Activated CD8-positive, alpha-beta T cell treated with anti-CD3 and anti-CD28 coated beads for 36 hours (primary cell): ENCODE measurements at regions of chr3 and their contacts with region 1.

Region 1: DNA sequence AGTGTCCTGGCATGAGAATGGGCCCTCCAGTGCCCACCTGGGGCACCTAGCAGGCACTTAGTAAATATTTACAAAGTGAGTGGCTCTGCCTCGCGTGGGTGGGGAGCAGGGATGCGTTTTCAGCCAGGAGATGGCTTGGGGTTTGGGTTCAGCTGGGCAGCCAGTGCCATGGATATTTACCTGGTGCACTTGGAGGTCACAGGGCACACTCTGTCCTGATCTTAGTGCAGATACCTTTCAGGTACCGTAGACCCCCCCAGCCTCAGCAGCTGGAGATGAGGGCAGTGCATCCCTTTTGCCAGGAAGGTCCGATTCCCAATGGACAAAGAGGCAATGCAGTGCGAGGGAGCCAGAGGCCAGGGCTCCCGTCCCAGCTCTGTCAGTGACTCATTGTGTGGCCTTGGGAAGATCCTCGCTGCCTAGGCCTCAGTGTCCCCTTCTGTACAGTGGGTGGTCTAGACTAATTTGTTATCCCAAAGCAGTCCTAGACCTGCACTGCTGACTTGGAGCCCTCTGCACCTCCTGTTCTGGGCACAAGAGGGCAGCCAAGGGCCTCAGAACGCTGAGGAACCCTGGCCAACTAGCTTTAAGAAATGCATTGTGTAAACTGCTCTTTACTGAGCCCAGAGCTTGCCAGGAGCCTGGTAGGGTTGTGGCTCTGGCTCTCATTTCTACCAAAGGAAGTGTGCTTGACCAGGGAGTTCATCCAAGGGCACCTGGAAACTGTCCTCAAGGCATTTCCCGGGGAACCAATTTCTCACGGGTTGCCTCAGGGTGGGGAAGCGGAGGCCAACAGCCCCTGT is 16.0 kb downstream of the HDAC11 start:
- DNase-seq: peak; percentile 85
- ATAC-seq: peak; percentile 98
- H3K4me3 Mint-ChIP-seq: no peak overlapping the region
- H3K27ac Mint-ChIP-seq: no peak overlapping the region
- H3K4me1 Mint-ChIP-seq: peaks cover 3% of the 10 kb centered on the region
- H3K27me3 Mint-ChIP-seq: no peaks in the 10 kb centered on the region
- CTCF ChIP-seq: peak; percentile 95

Region 2: DNA sequence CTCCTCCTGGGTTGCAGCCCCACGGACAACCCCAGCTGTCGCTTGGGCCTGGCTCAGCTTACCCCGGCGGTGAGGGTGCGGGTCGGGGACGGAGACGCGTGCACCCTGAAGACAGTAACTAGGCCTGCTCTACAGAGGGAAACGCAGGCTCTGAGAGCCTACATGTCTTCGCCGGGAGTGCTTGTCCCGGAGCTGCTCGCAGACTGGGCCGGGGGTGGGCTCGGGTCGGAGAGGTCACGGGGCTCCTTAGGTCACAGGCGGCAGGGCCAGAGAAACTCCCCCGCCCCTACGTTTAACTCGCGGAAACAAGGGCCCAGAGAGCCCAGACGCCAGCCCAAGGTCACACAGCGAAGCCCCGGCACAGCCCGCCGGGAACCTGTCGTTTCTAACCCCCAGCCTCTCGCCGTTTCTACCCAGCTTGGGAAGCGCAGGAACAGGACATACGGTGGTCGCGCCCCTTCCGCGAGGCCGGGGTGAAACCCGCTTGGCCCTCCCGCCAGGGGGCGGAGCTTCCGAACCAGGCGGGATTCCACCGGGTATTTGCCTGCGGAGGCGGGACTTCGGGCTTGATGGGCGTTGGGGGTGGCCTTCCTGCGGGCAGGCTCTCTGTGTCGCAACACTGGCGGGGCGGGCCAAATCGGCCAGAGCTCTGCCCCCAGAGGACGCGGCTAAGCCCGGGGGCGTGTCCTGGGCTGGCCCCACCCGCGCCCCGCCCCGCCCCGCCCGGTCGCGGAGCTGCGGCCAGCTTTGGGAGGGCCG is 16.4 kb before region 1 on chr3 and contains the start of gene HDAC11:
- CTCF ChIA-PET with region 1: interaction called, 23 read pairs
- POLR2A ChIA-PET with region 1: no interaction called
- intact Hi-C with region 1: no loop called
- DNase-seq: peak; percentile 98
- ATAC-seq: peak; percentile 97
- H3K4me3 Mint-ChIP-seq: peak within 1 kb of the TSS; percentile 90
- H3K27ac Mint-ChIP-seq: peak within 1 kb of the TSS; percentile 89
- H3K4me1 Mint-ChIP-seq: peaks cover 20% of the 10 kb centered on the region
- H3K27me3 Mint-ChIP-seq: no peaks in the 10 kb centered on the region
- CTCF ChIP-seq: no peak
- total RNA-seq, gene HDAC11: 1.8 to 2.0 TPM

Region 3: DNA sequence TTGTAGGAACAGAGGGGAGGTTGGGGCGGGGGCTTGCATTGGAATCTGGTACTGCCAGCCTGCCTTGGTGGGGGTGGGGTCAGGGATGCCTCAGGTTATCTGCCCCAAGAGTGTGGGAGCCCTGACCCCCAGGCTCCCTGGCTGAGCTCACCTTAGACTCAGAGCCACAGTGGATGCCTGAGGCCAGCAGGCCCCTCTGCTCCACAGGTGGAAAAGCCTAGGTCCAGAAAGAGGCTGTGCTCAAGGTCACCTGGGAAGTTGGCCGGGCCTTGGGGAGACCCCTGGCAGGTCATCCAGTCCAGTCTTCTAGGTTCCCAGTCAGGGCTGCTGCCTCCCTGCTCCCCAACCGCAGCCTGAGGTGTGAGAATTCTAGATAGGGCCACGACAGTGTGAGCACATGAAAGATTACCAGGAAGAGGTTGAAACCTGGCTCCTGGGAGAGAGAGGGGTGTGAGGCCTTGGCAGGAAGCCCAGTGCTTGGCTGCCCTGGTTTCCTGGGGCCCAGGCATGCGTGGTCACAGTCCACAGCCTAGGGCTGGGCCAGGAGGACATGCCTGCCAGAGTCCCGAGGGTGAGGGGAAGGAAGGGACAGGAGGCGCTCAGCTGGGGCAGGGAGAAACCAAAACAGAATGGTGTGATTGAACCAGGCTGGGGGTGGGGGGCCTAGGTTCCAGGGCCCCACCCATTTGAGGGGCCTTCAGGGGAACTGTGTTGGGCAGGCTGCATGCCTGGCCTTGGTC is 11.1 kb before region 1 on chr3:
- CTCF ChIA-PET with region 1: interaction called, 23 read pairs
- POLR2A ChIA-PET with region 1: no interaction called
- intact Hi-C with region 1: no loop called
- DNase-seq: peak; percentile 14
- ATAC-seq: no peak
- H3K4me3 Mint-ChIP-seq: no peak overlapping the region
- H3K27ac Mint-ChIP-seq: peak overlapping the region; percentile 26
- H3K4me1 Mint-ChIP-seq: peaks cover 19% of the 10 kb centered on the region
- H3K27me3 Mint-ChIP-seq: no peaks in the 10 kb centered on the region
- CTCF ChIP-seq: no peak

Region 4: DNA sequence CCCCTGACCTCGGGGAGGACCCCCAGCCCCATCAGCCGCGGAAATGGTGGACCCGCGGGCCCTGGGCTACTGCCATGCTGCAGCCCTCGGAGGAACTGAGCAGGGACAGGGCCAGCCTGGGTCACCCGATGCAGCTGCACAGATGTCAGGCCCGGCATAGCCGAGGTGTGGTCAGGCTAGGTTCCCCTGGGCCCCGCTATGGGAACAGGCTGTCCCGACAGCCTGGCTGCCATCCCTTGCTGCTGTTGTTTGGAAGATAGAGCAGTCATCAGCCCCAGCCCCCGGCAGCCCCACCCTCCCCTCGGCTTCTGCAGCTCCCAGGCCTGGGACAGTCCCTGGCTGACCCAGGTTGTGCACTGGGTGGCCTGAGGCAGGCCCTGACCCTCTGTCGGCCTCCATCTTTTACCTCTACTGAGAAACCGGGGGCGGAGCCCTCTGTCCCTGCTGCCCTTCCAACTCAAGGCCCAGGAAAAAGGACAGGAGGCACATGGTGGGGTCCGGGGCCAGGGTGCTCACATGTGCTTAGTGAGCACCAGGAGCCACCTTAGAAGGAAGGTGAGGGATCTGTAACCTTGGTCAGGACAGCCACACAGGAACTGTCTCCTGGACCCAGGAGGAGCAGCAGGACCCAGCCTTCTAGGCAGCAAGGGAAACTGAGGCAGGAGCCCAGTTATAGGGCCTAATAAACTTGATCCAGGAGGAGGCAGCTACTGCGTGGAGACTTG is 21.3 kb after region 1 on chr3:
- CTCF ChIA-PET with region 1: interaction called, 10 read pairs
- POLR2A ChIA-PET with region 1: no interaction called
- intact Hi-C with region 1: no loop called
- DNase-seq: no peak
- ATAC-seq: no peak
- H3K4me3 Mint-ChIP-seq: no peak overlapping the region
- H3K27ac Mint-ChIP-seq: no peak overlapping the region
- H3K4me1 Mint-ChIP-seq: no peaks in the 10 kb centered on the region
- H3K27me3 Mint-ChIP-seq: no peaks in the 10 kb centered on the region
- CTCF ChIP-seq: no peak

Region 5: GRCh38 chr3:13657660-13658435 is 161.7 kb after region 1 on chr3:
- CTCF ChIA-PET with region 1: interaction called, 349 read pairs
- POLR2A ChIA-PET with region 1: no interaction called
- intact Hi-C with region 1: no loop called
- DNase-seq: peak; percentile 71
- ATAC-seq: peak; percentile 78
- H3K4me3 Mint-ChIP-seq: no peak overlapping the region
- H3K27ac Mint-ChIP-seq: no peak overlapping the region
- H3K4me1 Mint-ChIP-seq: peaks cover 18% of the 10 kb centered on the region
- H3K27me3 Mint-ChIP-seq: peaks cover 11% of the 10 kb centered on the region
- CTCF ChIP-seq: peak; percentile 62